B cell (primary cell): ENCODE measurements at regions of chr12 and their contacts with region 1.

Region 1: GRCh38 chr12:7981446-7981845 is 45.5 kb upstream of the SLC2A3 start:
- DNase-seq: no peak
- ATAC-seq: no peak
- H3K4me3 ChIP-seq: no peak overlapping the region
- H3K4me3 Mint-ChIP-seq: no peak overlapping the region
- H3K27ac ChIP-seq: no peak overlapping the region
- H3K27ac Mint-ChIP-seq: no peak overlapping the region
- H3K4me1 ChIP-seq: peaks cover 14 to 19% of the 10 kb centered on the region in 2 donors
- H3K4me1 Mint-ChIP-seq: peaks cover 16% of the 10 kb centered on the region
- H3K27me3 ChIP-seq: no peaks in the 10 kb centered on the region
- H3K27me3 Mint-ChIP-seq: no peaks in the 10 kb centered on the region
- CTCF ChIP-seq: no peak

Region 2: GRCh38 chr12:7705831-7706230 is 275.6 kb before region 1 on chr12:
- CTCF ChIA-PET with region 1: no interaction called
- POLR2A ChIA-PET with region 1: no interaction called
- intact Hi-C with region 1: no loop called
- DNase-seq: no peak
- ATAC-seq: no peak
- H3K4me3 ChIP-seq: no peak overlapping the region
- H3K4me3 Mint-ChIP-seq: no peak overlapping the region
- H3K27ac ChIP-seq: no peak overlapping the region
- H3K27ac Mint-ChIP-seq: no peak overlapping the region
- H3K4me1 ChIP-seq: no peaks in the 10 kb centered on the region
- H3K4me1 Mint-ChIP-seq: no peaks in the 10 kb centered on the region
- H3K27me3 ChIP-seq: peaks cover 0 to 2% (median 0%) of the 10 kb centered on the region in 4 experiments
- H3K27me3 Mint-ChIP-seq: no peaks in the 10 kb centered on the region
- CTCF ChIP-seq: no peak

Region 3: DNA sequence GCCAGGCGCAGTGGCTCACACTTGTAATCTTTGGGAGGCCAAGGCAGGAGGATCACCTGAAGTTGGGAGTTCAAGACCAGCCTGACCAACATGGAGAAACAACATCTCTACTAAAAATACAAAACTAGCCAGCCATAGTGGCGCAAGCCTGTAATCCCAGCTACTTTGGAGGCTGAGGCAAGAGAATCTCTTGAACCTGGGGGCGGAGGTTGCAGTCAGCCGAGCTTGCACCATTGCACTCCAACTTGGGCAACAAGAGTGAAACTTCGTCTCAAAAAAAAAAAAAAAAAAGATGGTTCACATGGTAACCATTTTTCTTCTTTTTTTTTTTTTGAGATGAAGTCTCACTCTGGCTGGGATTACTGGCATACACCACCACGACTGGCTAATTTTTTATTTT is 144.1 kb before region 1 on chr12:
- CTCF ChIA-PET with region 1: no interaction called
- POLR2A ChIA-PET with region 1: no interaction called
- intact Hi-C with region 1: loop called (anchors 2 kb)
- DNase-seq: no peak
- ATAC-seq: no peak
- H3K4me3 ChIP-seq: no peak overlapping the region
- H3K4me3 Mint-ChIP-seq: no peak overlapping the region
- H3K27ac ChIP-seq: no peak overlapping the region
- H3K27ac Mint-ChIP-seq: no peak overlapping the region
- H3K4me1 ChIP-seq: no peaks in the 10 kb centered on the region
- H3K4me1 Mint-ChIP-seq: peaks cover 1% of the 10 kb centered on the region
- H3K27me3 ChIP-seq: no peaks in the 10 kb centered on the region
- H3K27me3 Mint-ChIP-seq: peaks cover 10% of the 10 kb centered on the region
- CTCF ChIP-seq: no peak